Body of pancreas (tissue), 4 donors: ENCODE measurements at regions of chr19 and their contacts with region 1.

Region 1: DNA sequence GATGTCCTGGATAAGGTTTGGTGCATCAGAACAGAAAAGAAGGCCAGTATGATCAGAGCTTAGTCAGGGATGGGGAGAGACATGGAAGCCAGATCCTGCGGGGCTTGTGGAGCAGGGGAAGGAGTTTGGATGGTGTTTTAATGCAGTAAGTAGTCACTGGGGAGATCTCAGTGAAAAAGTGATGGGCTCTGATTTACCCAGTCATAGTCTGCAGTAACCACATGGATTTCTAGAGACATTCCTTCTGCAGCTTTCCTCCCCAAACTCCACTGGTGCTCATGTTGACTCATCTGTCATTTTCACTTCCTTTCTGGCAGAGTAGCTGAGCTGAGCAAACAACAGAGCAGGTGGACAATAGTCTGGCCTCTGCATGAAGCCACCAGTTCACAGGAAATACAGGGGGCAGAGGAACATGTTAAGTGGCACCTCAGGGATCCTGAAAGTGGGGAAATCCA is 144.1 kb downstream of the DPF1 start:
- DNase-seq: peak in 3 of 4 donors; percentile 42 to 50 (median 44)
- ATAC-seq: peak; percentile 58
- H3K4me3 ChIP-seq: no peak overlapping the region
- H3K27ac ChIP-seq: peak overlapping the region in 2 of 4 donors; percentile 2 to 34
- H3K4me1 ChIP-seq: peaks cover 10% of the 10 kb centered on the region
- H3K27me3 ChIP-seq: no peaks in the 10 kb centered on the region
- CTCF ChIP-seq: no peak
- POLR2A ChIP-seq: no peak

Region 2: DNA sequence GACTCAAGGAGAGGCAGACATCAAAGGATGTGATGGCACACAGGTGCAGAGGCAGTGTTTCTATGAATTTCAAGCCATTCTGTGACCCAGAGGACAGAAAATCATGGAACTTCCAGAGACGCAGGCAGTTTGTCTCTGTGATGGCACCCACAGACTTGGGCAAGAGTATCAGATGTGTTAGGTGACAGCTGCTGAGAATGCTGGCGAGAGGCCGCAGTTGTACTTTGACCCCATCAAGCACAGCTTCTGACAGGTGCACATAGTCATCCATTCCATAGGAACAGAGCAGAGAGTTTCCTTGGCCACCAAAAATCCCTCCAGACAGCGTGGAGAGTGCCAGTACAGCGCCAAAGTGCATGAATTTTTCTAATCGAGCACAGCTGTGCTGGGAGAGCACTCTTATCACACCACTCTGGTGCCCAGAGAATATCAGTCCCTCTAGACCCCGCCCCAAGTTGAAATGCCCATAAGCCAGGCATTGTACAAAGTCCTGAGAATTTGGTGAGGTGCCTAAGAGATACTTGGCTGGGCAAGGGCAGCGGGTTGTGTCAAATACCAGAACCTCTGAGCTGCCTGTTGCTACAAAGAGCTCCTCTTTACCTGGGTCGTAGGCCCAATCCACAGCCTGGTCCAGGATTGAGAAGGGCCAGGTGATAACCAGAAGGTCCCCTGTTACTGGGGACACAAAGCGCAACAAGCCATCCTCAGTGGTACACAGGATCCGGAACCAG is 185.9 kb before region 1 on chr19:
- intact Hi-C with region 1: loop called (anchors 10 kb)
- DNase-seq: no peak
- ATAC-seq: no peak
- H3K4me3 ChIP-seq: no peak overlapping the region
- H3K27ac ChIP-seq: no peak overlapping the region
- H3K4me1 ChIP-seq: no peaks in the 10 kb centered on the region
- H3K27me3 ChIP-seq: no peaks in the 10 kb centered on the region
- CTCF ChIP-seq: no peak
- POLR2A ChIP-seq: no peak